A673 (cell line): ENCODE measurements at regions of chr1 and their contacts with region 1.

Region 1: GRCh38 chr1:92858564-92859399 is 26.9 kb downstream of the RPL5 start:
- DNase-seq: peak; percentile 90
- H3K4me3 ChIP-seq: peak overlapping the region; percentile 1
- H3K27ac ChIP-seq: no peak overlapping the region
- H3K4me1 ChIP-seq: no peaks in the 10 kb centered on the region
- H3K27me3 ChIP-seq: no peaks in the 10 kb centered on the region
- CTCF ChIP-seq: peak; percentile 99

Region 2: GRCh38 chr1:92960395-92961130 is 101.8 kb after region 1 on chr1:
- CTCF ChIA-PET with region 1: interaction called, 7 read pairs
- POLR2A ChIA-PET with region 1: no interaction called
- intact Hi-C with region 1: loop called (anchors 1 kb)
- DNase-seq: peak; percentile 91
- H3K4me3 ChIP-seq: peak overlapping the region; percentile 88
- H3K27ac ChIP-seq: peak overlapping the region; percentile 76
- H3K4me1 ChIP-seq: peaks cover 21% of the 10 kb centered on the region
- H3K27me3 ChIP-seq: no peaks in the 10 kb centered on the region
- CTCF ChIP-seq: peak; percentile 85

Region 3: DNA sequence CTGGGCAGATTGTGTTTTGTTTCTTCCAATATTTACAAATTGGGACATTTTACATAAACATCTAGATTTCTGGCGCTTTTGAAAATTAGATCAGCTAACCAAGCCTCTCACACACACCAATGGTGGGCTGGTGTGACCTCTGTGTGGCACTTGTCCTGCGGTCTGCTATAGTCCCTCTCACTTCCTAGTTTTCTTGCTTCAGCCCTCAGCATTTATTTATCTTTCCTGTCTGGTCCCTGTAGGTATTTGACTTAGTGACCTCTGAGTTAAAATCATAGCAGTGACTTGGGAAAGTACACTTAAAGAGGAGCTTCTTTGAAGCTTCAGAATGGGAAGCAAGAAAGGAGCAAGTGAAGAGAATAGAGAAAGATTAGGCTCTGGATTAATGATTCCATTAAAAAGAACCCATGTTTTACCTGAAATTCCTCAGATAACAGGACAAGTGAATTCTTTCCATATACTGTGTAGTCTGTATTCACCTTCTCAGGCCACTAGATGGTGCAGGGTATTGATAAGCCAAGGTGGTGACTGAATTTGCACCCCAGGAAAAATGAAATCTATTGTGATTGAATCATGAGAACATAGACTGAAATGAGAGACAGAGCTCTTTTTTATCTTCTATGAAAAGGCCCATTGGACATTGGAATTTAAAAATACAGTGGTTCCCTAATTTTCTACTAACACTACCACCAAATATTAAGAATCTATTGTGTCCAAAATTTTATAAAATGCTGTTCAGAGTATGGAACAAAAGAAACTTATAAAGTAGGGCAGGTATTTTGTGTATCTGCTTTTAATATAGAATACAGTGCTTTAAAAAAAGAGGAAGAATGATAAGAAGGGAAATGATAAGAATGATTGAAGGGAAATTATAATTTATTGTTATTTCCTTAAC is 109.6 kb after region 1 on chr1:
- CTCF ChIA-PET with region 1: interaction called, 13 read pairs
- POLR2A ChIA-PET with region 1: no interaction called
- intact Hi-C with region 1: no loop called
- DNase-seq: peak; percentile 45
- H3K4me3 ChIP-seq: no peak overlapping the region
- H3K27ac ChIP-seq: no peak overlapping the region
- H3K4me1 ChIP-seq: peaks cover 15% of the 10 kb centered on the region
- H3K27me3 ChIP-seq: no peaks in the 10 kb centered on the region
- CTCF ChIP-seq: peak; percentile 59

Region 4: DNA sequence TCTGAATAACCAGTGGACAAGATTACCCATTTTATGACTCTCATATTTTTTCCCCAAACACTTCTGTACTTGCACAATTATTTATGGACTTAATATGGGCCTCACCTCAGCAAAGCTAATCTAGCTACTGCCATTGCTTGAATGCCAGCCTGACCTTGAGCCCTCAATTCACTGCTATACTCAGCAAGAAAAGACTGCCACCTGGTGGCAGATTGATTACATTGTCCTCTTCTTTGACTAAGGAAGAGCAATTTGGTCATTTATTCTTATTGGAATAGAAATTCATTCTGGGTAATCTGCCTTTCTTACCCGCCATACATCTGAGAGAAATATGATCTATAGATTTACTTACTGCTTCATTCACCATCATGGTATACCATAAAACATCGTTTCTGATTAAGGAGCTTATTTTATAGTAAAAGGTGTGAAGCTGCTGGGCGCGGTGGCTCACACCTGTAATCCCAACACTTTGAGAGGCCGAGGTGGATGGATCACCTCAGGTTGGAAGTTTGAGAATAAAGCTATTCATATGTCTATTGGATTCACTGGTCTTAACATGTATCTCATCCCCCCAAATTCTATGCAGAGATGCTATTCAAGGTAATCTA is 135.4 kb after region 1 on chr1:
- CTCF ChIA-PET with region 1: interaction called, 22 read pairs
- POLR2A ChIA-PET with region 1: no interaction called
- intact Hi-C with region 1: loop called (anchors 1 kb)
- DNase-seq: peak; percentile 91
- H3K4me3 ChIP-seq: no peak overlapping the region
- H3K27ac ChIP-seq: no peak overlapping the region
- H3K4me1 ChIP-seq: peaks cover 9% of the 10 kb centered on the region
- H3K27me3 ChIP-seq: no peaks in the 10 kb centered on the region
- CTCF ChIP-seq: peak; percentile 84

Region 5: GRCh38 chr1:93061895-93062792 is 203.4 kb after region 1 on chr1:
- CTCF ChIA-PET with region 1: interaction called, 3 read pairs
- POLR2A ChIA-PET with region 1: no interaction called
- intact Hi-C with region 1: loop called (anchors 2 kb)
- DNase-seq: peak; percentile 58
- H3K4me3 ChIP-seq: no peak overlapping the region
- H3K27ac ChIP-seq: no peak overlapping the region
- H3K4me1 ChIP-seq: no peaks in the 10 kb centered on the region
- H3K27me3 ChIP-seq: peaks cover 4% of the 10 kb centered on the region
- CTCF ChIP-seq: peak; percentile 70